Common myeloid progenitor, CD34-positive (primary cell): ENCODE measurements at regions of chr2 and their contacts with region 1.

Region 1: DNA sequence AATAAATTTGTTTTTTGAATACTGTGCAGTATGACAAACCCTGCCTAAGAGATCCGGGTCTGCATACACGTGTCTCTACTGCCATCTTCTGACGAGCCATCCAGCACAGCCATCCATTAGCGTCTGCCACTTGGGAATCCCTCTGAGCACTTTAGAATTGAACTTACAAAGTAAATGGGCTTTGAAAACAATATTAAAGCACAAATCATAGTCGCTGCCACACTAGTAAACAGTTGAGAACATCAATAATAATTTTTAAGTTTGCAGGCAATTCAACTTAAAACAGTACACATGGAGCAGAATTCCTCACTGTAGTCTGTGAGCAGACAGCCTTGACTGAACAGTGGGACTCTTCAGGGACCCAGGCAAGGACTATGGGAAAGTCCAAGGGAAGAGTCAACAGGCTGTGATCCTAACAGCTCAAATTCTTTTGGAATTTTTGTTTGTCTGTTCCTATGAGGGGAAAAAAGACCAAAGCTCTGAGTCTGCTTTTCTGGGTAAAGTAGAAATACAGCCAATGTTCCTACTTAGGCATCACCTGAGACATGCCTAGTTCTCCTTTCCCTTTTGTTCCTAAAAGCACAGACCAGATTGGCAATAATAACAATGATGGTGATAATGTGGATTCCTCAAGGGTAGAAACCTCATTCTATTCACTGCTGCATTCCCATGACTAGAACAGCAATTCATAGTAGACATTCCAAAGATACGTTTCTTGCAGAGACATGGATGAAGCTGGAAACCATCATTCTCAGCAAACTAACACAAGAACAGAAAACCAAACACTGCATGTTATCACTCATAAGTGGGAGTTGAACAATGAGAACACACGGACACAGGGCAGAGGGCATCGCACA is 92.9 kb downstream of the MREG start:
- DNase-seq: peak; percentile 67 to 87 (median 82)
- H3K4me3 ChIP-seq: no peak overlapping the region
- H3K27ac ChIP-seq: no peak overlapping the region
- H3K4me1 ChIP-seq: peaks cover 0 to 16% (median 11%) of the 10 kb centered on the region in 4 experiments
- H3K27me3 ChIP-seq: no peaks in the 10 kb centered on the region

Region 2: DNA sequence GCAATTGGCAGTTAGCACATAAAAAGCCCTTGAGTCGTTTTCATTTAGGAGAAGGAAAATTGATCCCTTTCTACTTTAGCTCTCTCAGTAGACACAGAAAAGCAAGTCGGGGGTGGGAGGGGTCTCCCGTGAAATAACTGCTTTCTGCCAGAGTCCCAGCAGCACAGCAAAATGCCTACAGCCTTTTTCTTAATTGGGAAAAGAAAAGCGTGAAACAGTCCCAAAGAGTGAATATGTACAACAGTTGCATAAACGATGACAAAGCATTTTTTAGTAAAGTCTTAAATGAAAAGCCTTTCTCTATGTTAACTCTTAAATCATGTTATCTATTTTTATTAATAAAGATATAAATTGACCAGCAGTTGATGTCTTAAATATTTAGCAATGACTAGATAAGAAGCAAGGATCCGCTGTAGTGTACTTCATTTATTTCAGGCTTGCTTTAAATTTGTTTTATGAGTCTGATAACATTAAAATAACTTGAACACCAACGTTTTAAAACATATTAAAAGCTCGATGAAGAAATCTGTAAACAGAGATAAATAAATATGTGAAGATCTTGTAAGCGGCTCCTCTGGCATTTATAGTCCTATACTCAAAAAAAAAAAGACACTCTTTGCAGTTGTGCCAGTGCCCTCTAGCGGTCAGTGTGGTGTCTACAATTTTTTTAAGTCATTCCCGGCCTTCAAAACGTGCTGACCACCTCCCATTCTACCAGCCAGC is 650.9 kb before region 1 on chr2:
- CTCF ChIA-PET with region 1: interaction called, 11 read pairs
- POLR2A ChIA-PET with region 1: no interaction called
- DNase-seq: peak; percentile 76 to 83 (median 80)
- H3K4me3 ChIP-seq: peak overlapping the region in 2 of 7 experiments; percentile 7 to 26
- H3K27ac ChIP-seq: no peak overlapping the region
- H3K4me1 ChIP-seq: peaks cover 0 to 3% (median 0%) of the 10 kb centered on the region in 4 experiments
- H3K27me3 ChIP-seq: no peaks in the 10 kb centered on the region

Region 3: DNA sequence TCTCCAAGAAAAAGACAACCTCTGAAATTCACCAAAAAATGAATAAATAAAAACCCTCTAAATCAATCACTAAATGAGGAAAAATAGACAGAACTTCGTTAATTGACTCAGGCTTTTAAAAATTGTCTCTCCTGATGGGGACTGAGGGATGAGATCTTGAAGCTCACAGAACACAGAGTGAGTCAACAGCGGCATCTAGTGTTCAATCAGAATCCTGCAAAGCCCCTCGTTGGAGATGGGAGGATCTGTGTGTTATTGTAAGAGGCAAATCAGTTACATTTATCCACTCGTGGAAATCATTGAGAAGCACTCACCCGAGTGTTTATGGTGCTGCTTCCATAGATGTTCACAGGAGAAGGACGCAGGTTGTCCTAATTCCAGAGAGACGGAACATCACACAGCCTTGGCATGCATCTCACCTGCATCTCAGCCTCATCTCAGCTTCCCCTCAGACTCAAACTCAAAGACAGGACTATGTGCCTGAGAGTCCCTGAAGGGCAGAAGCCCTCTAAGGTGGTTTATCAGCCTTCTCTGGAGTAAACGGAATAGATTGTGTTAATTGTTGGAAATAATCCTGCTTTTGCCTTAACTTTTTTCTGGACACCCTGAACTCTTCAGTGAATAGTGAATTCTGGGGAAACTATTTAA is 10.9 kb after region 1 on chr2:
- CTCF ChIA-PET with region 1: interaction called, 16 read pairs
- POLR2A ChIA-PET with region 1: no interaction called
- DNase-seq: peak; percentile 62 to 79 (median 72)
- H3K4me3 ChIP-seq: no peak overlapping the region
- H3K27ac ChIP-seq: no peak overlapping the region
- H3K4me1 ChIP-seq: peaks cover 0 to 8% (median 3%) of the 10 kb centered on the region in 4 experiments
- H3K27me3 ChIP-seq: no peaks in the 10 kb centered on the region